Lower leg skin (tissue), 4 donors: ENCODE measurements at regions of chr6 and their contacts with region 1.

Region 1: GRCh38 chr6:32853541-32854375 is at the starts of genes PSMB9 and TAP1:
- DNase-seq: peak; percentile 95 to 99
- H3K4me3 ChIP-seq: peak within 1 kb of the TSS; percentile 90
- CTCF ChIP-seq: peak in 1 of 3 donors; percentile 65
- POLR2A ChIP-seq: peak in 1 of 2 donors; percentile 73
- total RNA-seq, gene PSMB9: 25.4 to 29.9 (median 28.1) TPM
- total RNA-seq, gene TAP1: 90.7 to 113 (median 105) TPM

Region 2: DNA sequence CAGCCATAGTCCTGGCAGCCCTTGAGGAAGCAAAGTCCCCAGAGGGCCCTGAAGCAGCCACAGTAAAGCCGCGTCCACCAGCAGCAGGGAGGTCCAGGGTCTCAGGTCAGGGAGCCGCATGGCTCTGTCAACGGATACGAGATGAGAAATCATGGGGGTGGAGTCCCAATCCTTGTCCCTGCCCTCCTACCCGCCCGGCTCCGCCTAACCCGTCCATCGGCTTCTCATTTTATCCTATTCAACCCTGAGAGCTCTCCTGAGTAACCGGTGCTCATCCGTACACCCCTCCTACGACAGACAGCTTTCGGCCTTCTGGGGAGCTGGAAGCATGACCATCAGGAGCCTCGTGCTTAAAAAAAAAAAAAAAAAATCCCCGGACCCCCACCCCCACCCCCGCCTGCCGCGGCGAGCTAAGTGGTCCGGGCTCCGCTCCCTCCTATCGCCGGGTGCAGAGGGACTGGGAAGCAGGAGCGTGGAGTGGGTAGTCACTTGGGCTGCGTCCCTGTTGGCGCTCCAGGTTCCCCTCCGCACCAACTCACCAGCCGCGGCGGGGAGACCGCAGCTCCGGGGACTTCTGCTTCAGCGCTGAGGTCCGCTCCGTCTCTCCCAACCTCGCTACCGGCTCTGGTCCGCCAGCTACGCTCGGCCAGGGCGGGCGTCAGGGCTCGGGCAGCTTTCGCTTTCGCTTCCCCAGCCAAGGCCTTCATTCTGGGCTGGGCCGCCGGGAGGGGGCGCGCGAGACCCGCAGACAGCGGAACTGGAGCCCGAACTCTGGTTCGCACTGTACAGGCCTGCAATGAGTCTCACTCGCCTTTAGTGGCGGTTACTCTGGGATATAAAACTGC is 15.4 kb before region 1 on chr6 and contains the start of gene TAP2:
- intact Hi-C with region 1: loop called (anchors 2 kb)
- DNase-seq: peak; percentile 95 to 99
- H3K4me3 ChIP-seq: peak within 1 kb of the TSS; percentile 53
- CTCF ChIP-seq: peak in 1 of 3 donors; percentile 69
- POLR2A ChIP-seq: no peak
- total RNA-seq, gene TAP2: 13.6 to 23.3 (median 15.6) TPM

Region 3: DNA sequence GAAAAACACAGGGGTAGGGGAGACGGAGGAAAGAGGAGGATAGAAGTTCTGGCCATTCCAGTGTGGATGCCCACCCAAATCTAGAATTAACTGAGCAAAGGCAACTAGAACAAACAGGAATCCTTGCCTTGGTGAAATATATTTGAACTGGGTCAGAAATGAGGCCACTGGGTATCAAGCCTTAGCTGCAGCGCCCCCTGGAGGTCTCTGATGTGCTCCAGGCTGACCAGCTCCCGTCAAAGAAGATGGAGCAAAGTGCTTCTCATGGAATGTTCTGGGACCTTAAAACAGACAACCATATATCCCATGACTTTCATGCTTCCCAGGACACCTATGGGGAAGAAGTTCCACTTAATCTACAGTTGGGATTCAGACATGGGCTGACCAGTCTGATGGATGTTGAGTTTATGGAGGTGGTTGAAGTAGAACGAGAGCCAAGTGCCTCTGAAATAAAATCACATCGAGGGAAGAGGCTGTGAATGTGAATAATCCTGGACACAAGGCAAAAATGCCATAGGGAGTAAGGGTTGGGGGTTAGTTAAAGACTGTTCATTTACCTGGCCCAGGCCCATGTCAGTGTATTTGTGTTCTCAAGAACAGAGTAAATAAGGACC is 272.4 kb after region 1 on chr6:
- intact Hi-C with region 1: no loop called
- DNase-seq: peak in 1 of 2 donors; percentile 89
- H3K4me3 ChIP-seq: no peak overlapping the region
- CTCF ChIP-seq: no peak
- POLR2A ChIP-seq: no peak